Posterior vena cava (tissue), 2 donors: ENCODE measurements at regions of chr12 and their contacts with region 1.

Region 1: DNA sequence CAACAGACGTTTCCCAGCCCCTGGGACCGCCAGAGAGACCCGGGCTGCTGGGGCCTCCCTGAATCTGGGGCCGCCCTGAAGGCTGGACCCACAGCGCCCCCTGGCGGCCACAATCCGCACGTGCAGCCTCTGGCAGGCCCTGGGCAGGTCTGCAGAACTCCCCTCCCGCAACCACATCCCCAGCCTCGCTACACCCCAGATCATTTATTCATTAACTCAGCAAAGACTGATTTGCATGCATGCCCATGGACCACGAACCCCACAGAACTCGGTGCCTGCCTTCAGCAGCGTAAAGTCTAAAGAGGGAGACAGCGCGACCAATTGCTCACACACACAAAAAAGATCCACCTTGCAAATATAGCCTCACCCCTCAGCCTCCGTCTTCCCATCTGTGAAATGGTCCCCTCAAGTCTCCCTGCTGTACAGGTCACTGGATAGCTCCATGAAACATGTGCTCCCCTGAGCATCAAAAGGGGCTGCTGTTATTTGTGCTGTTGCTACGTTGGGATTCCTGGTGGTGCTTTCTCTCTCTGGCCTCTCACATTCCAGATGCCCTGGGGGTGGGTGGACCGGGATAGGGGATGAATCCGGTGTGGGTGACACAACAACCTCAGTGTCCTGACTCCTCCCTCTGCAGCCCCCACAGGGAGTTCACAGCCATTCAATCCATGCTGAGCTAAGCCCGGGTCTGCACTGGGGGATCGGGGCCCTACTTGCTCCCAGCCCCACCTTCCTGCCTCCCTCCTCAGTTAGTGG is 96.4 kb downstream of the SCARB1 start:
- DNase-seq: peak; percentile 96

Region 2: GRCh38 chr12:124036674-124037109 is 730.6 kb before region 1 on chr12:
- intact Hi-C with region 1: loop called (anchors 5 kb)
- DNase-seq: no peak

Region 3: DNA sequence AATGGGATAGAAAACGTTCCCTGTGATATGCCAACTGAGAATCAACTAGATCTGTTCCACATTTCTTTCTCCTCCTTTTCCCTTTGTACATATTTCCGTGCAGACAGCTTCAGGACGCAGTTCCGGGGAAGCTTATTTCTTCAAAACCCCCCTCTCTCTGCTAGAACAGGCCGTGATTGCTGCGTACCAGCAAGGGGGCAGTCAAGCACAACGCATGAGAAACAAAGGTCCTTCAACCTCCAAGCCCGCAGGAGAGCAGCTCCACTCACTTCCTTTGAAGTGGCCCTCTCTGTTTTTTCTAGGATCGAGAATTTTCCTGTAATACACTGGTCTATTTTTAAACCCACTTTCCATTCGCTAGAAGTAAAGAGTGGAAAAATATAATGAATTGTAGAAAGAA is 713.4 kb before region 1 on chr12:
- intact Hi-C with region 1: loop called in 1 of 2 experiments (anchors 5 kb)
- DNase-seq: no peak

Region 4: GRCh38 chr12:124347716-124348357 is 419.4 kb before region 1 on chr12:
- intact Hi-C with region 1: loop called in 1 of 2 experiments (anchors 10 kb)
- DNase-seq: no peak

Region 5: GRCh38 chr12:124625867-124626675 is 141.2 kb before region 1 on chr12:
- intact Hi-C with region 1: loop called in 1 of 2 experiments (anchors 10 kb)
- DNase-seq: peak; percentile 97

Region 6: DNA sequence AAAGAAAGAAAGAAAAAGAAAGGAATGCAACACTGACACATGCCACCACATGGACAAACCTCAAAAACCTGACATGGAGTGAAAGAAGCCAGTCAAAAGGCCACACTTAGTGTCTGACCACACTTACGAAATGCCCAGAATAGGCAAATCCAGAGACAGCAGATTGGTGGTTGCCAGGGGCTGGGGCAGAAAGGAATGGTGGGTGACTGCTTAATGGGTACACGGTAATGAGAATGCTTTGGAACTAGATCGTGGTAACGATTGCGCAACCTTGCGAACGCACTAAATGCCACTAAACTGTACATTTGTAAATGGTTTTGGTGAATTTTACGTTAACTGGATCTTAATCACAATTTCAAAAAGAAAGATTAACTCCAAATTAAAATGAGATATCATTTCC is 57.0 kb after region 1 on chr12:
- intact Hi-C with region 1: no loop called
- DNase-seq: no peak